GM10248 (cell line): ENCODE measurements at regions of chr17 and their contacts with region 1.

Region 1: DNA sequence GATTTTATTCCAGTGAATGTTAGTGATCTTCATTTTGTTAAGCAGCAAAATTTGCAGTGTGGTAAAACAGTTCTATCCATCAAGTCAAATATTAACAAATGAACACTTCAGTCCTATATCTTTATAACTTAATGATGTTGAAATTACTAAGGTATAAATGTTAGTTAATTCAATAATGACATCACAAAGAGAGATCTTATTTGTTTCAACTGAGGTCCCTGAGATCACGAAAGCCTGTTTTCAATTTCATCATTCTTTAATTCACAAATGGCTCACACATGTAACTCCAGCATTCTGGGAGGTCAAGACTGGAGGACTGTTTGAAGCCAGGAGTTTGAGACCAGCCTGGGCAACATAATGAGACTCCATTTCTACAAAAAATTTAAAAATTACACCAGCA is 13.9 kb downstream of the SMURF2 start:
- DNase-seq: no peak
- CTCF ChIP-seq: no peak

Region 2: GRCh38 chr17:64635647-64636307 is 12.5 kb before region 1 on chr17:
- CTCF ChIA-PET with region 1: interaction called, 54 read pairs
- POLR2A ChIA-PET with region 1: no interaction called
- DNase-seq: peak; percentile 31
- CTCF ChIP-seq: no peak